Sigmoid colon (tissue), 7 donors: ENCODE measurements at regions of chr16 and their contacts with region 1.

Region 1: GRCh38 chr16:69565671-69566239 is at the start of gene NFAT5:
- DNase-seq: peak; percentile 95
- H3K4me3 ChIP-seq: peak within 1 kb of the TSS; percentile 83 to 96 (median 92)
- H3K27ac ChIP-seq: peak within 1 kb of the TSS; percentile 98 to 99 (median 99)
- H3K4me1 ChIP-seq: peaks cover 0 to 50% (median 43%) of the 10 kb centered on the region in 4 donors
- H3K27me3 ChIP-seq: no peaks in the 10 kb centered on the region
- CTCF ChIP-seq: no peak
- EP300 ChIP-seq: no peak
- POLR2A ChIP-seq: peak; percentile 72 to 86
- total RNA-seq, gene NFAT5: 39.4 to 57.1 (median 49.0) TPM

Region 2: GRCh38 chr16:69396187-69397061 is 169.3 kb before region 1 on chr16:
- intact Hi-C with region 1: loop called (anchors 2 kb)
- DNase-seq: peak; percentile 89
- H3K4me3 ChIP-seq: no peak overlapping the region
- H3K27ac ChIP-seq: peak overlapping the region; percentile 77 to 82 (median 80)
- H3K4me1 ChIP-seq: peaks cover 0 to 18% (median 12%) of the 10 kb centered on the region in 4 donors
- H3K27me3 ChIP-seq: no peaks in the 10 kb centered on the region
- CTCF ChIP-seq: peak; percentile 16 to 67 (median 66)
- EP300 ChIP-seq: peak in 1 of 4 donors; percentile 6
- POLR2A ChIP-seq: no peak

Region 3: DNA sequence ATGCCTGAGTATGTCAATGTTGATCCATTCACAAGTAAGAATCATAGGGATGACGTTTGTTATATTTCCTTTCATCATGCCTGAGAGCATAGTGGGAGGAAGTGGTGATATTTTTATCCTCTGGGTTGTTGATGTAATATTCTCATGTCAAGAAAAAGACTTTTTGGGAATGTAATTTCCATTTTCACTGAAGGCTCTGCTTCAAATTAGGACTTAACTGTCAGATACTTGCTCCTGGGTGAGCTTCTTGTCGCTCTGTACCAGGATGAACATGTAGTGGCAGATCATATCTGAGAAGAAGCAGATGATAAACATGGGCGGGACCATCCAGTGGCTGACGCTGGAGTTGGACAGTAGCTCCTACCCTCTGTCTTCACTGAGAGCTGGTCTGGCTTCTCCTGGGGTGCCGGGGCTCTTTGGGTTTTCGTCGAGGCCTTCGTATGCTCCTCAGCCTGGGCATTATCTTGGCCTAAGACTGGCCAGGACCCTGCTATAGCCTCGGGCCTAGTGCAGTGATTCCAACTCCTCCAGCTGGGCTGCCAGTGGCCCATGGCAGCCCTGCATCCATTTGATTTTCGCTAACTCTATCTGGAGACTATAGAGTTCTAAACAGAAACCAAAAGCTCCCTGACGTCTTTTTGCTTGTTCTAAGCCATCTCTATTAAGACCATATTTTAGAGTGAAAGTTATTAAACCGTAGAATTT is 121.7 kb before region 1 on chr16:
- intact Hi-C with region 1: loop called (anchors 5 kb)
- DNase-seq: peak; percentile 84
- H3K4me3 ChIP-seq: peak overlapping the region; percentile 2 to 35 (median 25)
- H3K27ac ChIP-seq: peak overlapping the region; percentile 66 to 82 (median 80)
- H3K4me1 ChIP-seq: peaks cover 0 to 37% (median 28%) of the 10 kb centered on the region in 4 donors
- H3K27me3 ChIP-seq: no peaks in the 10 kb centered on the region
- CTCF ChIP-seq: peak in 1 of 4 experiments; percentile 11
- EP300 ChIP-seq: no peak
- POLR2A ChIP-seq: no peak

Region 4: DNA sequence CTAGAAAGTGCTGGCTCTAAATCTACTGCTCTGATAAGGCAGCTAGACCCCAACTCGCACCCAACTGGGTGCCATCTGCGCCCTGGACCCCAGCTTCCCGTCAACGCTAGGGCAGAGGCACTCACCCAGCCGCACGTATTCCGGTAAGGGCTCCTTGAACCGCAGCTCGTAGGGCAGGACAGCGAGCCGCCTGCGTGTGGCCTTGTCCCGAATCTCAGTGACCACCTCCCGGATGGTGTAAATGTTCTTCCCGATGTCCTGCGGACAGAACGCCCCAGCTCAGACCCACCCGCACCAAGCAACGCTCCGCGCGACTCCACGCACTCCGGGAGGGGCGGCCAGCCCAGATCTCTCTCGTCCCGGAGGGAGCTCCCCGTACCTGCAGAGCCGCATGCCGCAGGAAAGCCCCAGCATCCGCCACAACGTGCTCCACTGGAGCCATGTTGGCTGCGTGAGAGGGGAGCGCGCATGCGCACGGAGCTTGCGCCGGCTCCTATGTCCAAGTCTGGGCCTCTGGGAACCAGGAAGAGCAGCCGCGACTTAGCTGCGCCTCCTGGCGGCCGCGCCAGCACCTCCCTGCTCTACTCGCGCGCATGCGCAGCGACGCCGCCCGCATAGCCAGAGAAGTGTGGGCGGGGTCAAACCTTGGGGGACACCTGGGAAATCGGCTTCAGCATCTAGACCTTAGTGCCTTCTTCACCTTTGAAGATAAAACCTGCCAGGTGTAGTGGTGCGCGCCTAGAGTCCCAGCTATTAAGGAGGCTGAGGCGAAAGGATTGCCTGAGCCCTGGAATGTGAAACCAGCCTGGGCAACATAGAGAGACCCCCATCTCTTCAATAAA is 188.9 kb after region 1 on chr16 and contains the start of gene NOB1:
- intact Hi-C with region 1: loop called (anchors 10 kb)
- DNase-seq: peak; percentile 98
- H3K4me3 ChIP-seq: peak within 1 kb of the TSS; percentile 70 to 96 (median 76)
- H3K27ac ChIP-seq: peak within 1 kb of the TSS; percentile 63 to 81 (median 76)
- H3K4me1 ChIP-seq: peaks cover 0 to 23% (median 21%) of the 10 kb centered on the region in 4 donors
- H3K27me3 ChIP-seq: no peaks in the 10 kb centered on the region
- CTCF ChIP-seq: peak; percentile 92 to 100 (median 99)
- EP300 ChIP-seq: no peak
- POLR2A ChIP-seq: peak; percentile 11 to 20
- total RNA-seq, gene NOB1: 31.0 to 40.0 (median 35.7) TPM